Caco-2 (cell line): ENCODE measurements at regions of chr12 and their contacts with region 1.

Region 1: GRCh38 chr12:16048511-16048910 is 137.4 kb downstream of the DERA start:
- DNase-seq: peak in 1 of 2 experiments; percentile 40
- H3K4me3 ChIP-seq: no peak overlapping the region
- H3K4me3 Mint-ChIP-seq: no peak overlapping the region
- H3K27ac Mint-ChIP-seq: peak overlapping the region; percentile 42
- H3K4me1 ChIP-seq: no peaks in the 10 kb centered on the region
- H3K4me1 Mint-ChIP-seq: peaks cover 7% of the 10 kb centered on the region
- H3K27me3 ChIP-seq: no peaks in the 10 kb centered on the region
- H3K27me3 Mint-ChIP-seq: no peaks in the 10 kb centered on the region
- CTCF ChIP-seq: no peak

Region 2: DNA sequence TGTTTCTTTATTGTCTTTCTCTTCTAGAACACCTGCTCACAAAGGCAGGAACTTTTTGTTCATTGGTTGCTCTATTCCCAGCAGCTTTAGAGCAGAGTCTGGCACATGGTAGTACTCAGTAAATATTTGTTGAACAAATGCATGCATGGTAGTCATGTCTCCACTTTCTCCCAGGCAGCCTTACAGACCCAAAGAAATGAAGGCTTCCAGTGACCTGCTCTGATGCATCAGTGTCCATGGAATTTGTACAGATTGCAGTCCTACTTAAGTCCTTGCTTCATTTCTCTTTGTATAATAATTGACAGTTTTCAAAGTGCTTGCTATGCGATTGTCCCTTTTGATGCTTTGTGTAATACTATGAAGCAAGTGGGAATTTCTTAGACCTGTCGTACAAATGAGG is 17.8 kb before region 1 on chr12:
- CTCF ChIA-PET with region 1: interaction called, 3 read pairs
- POLR2A ChIA-PET with region 1: no interaction called
- intact Hi-C with region 1: loop called (anchors 1 kb)
- DNase-seq: peak; percentile 80 to 81
- H3K4me3 ChIP-seq: no peak overlapping the region
- H3K4me3 Mint-ChIP-seq: no peak overlapping the region
- H3K27ac Mint-ChIP-seq: peak overlapping the region; percentile 81
- H3K4me1 ChIP-seq: peaks cover 24% of the 10 kb centered on the region
- H3K4me1 Mint-ChIP-seq: peaks cover 23% of the 10 kb centered on the region
- H3K27me3 ChIP-seq: no peaks in the 10 kb centered on the region
- H3K27me3 Mint-ChIP-seq: no peaks in the 10 kb centered on the region
- CTCF ChIP-seq: no peak

Region 3: GRCh38 chr12:16063713-16064112 is 15.2 kb after region 1 on chr12:
- CTCF ChIA-PET with region 1: no interaction called
- POLR2A ChIA-PET with region 1: no interaction called
- intact Hi-C with region 1: loop called (anchors 2 kb)
- DNase-seq: no peak
- H3K4me3 ChIP-seq: no peak overlapping the region
- H3K4me3 Mint-ChIP-seq: no peak overlapping the region
- H3K27ac Mint-ChIP-seq: no peak overlapping the region
- H3K4me1 ChIP-seq: no peaks in the 10 kb centered on the region
- H3K4me1 Mint-ChIP-seq: no peaks in the 10 kb centered on the region
- H3K27me3 ChIP-seq: no peaks in the 10 kb centered on the region
- H3K27me3 Mint-ChIP-seq: peaks cover 2% of the 10 kb centered on the region
- CTCF ChIP-seq: no peak

Region 4: DNA sequence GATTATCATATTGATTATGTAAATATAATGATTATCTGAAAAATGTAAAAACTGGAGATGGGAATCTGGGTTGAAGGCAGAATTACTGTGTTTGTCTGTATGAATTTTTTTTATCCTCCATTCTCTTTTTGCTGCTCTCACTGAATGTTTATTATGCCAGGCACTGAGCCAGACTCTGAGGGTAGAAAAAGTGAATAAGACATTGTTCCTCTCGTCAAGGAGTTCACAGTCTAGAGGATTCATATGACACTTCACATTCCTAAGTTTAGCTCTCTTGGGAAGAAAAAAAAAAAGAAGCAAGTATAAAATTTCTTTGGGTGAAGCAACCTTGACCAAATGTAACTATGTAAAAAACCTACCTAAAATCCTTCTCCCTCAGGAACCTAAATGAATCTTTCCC is 678.4 kb after region 1 on chr12:
- CTCF ChIA-PET with region 1: no interaction called
- POLR2A ChIA-PET with region 1: no interaction called
- intact Hi-C with region 1: no loop called
- DNase-seq: no peak
- H3K4me3 ChIP-seq: no peak overlapping the region
- H3K4me3 Mint-ChIP-seq: no peak overlapping the region
- H3K27ac Mint-ChIP-seq: no peak overlapping the region
- H3K4me1 ChIP-seq: no peaks in the 10 kb centered on the region
- H3K4me1 Mint-ChIP-seq: no peaks in the 10 kb centered on the region
- H3K27me3 ChIP-seq: no peaks in the 10 kb centered on the region
- H3K27me3 Mint-ChIP-seq: no peaks in the 10 kb centered on the region
- CTCF ChIP-seq: no peak